Aorta (tissue), 5 donors: ENCODE measurements at regions of chr9 and their contacts with region 1.

Region 1: GRCh38 chr9:92140074-92140753 is 25.0 kb upstream of the SPTLC1 start:
- DNase-seq: peak; percentile 86 to 93
- ATAC-seq: peak; percentile 81
- H3K4me3 ChIP-seq: no peak overlapping the region
- H3K27ac ChIP-seq: no peak overlapping the region
- H3K4me1 ChIP-seq: no peaks in the 10 kb centered on the region
- H3K27me3 ChIP-seq: no peaks in the 10 kb centered on the region

Region 2: GRCh38 chr9:92234514-92234913 is 94.3 kb after region 1 on chr9:
- intact Hi-C with region 1: loop called (anchors 5 to 10 kb)
- DNase-seq: no peak
- ATAC-seq: no peak
- H3K4me3 ChIP-seq: no peak overlapping the region
- H3K27ac ChIP-seq: no peak overlapping the region
- H3K4me1 ChIP-seq: no peaks in the 10 kb centered on the region
- H3K27me3 ChIP-seq: no peaks in the 10 kb centered on the region

Region 3: GRCh38 chr9:92790542-92791527 is 650.6 kb after region 1 on chr9:
- intact Hi-C with region 1: loop called in 1 of 2 experiments (anchors 10 kb)
- DNase-seq: peak; percentile 78 to 88
- ATAC-seq: peak; percentile 91
- H3K4me3 ChIP-seq: no peak overlapping the region
- H3K27ac ChIP-seq: no peak overlapping the region
- H3K4me1 ChIP-seq: no peaks in the 10 kb centered on the region
- H3K27me3 ChIP-seq: peaks cover 0 to 2% of the 10 kb centered on the region in 2 donors